Calu3 (cell line): ENCODE measurements at regions of chr17 and their contacts with region 1.

Region 1: DNA sequence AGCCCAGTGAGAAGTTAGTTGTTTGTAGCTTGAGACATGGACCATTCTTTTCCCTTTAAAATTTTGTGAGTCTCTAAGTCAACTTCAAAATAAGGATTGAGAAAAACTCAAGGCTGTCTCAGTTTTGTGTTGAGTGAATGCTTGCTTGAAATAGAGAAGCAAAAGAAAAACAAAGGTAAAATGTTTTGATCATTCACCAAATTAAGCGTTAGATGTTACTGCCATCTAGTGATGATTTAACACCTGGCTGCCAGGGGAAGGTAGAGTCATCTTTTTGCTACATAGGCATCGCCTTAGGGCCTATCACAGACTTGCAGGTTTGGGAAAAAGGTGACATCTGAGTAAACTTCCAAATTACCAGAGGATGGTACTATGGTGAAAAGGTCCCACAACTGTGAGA is 74.4 kb downstream of the PCTP start:
- DNase-seq: peak; percentile 13
- H3K4me3 Mint-ChIP-seq: no peak overlapping the region
- H3K27ac Mint-ChIP-seq: no peak overlapping the region
- H3K4me1 Mint-ChIP-seq: no peaks in the 10 kb centered on the region
- H3K27me3 Mint-ChIP-seq: peaks cover 18% of the 10 kb centered on the region
- CTCF ChIP-seq: no peak

Region 2: GRCh38 chr17:55388842-55389241 is 436.4 kb before region 1 on chr17:
- CTCF ChIA-PET with region 1: no interaction called
- intact Hi-C with region 1: no loop called
- DNase-seq: no peak
- H3K4me3 Mint-ChIP-seq: no peak overlapping the region
- H3K27ac Mint-ChIP-seq: no peak overlapping the region
- H3K4me1 Mint-ChIP-seq: peaks cover 7% of the 10 kb centered on the region
- H3K27me3 Mint-ChIP-seq: no peaks in the 10 kb centered on the region
- CTCF ChIP-seq: no peak

Region 3: GRCh38 chr17:55607731-55608341 is 217.4 kb before region 1 on chr17:
- CTCF ChIA-PET with region 1: no interaction called
- intact Hi-C with region 1: loop called (anchors 5 kb)
- DNase-seq: peak; percentile 37
- H3K4me3 Mint-ChIP-seq: no peak overlapping the region
- H3K27ac Mint-ChIP-seq: no peak overlapping the region
- H3K4me1 Mint-ChIP-seq: no peaks in the 10 kb centered on the region
- H3K27me3 Mint-ChIP-seq: no peaks in the 10 kb centered on the region
- CTCF ChIP-seq: no peak

Region 4: DNA sequence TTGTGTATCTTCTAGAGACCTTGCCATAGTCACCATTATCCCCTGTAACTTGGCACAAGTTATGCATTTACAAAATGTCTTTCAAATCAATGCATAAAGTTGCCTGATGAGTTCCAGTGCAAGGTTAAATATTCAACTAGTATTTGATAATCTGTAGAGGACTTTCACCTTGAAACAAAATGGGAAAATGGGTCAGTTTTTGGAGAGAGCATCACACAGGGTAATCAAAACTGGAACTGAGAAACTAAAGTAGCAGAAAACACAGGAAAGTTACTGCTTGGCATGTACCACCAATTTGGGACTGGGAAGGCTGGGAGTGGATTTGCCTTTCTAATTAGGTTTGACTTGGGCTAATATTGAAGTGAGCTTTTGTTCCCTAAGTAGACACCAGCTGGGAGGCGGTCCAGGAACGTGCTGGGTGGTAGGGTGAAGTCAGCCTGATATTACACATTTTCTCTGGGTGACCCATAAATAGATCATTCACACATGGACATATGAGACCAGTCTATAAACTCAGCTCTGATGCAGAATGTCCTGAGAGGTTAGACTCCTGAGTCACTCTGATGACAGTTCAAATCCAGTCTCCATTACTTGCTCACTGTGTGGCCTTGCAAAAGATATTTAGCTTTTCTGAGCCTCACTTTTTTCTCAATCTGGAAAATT is 77.9 kb after region 1 on chr17:
- CTCF ChIA-PET with region 1: no interaction called
- intact Hi-C with region 1: no loop called
- DNase-seq: no peak
- H3K4me3 Mint-ChIP-seq: no peak overlapping the region
- H3K27ac Mint-ChIP-seq: no peak overlapping the region
- H3K4me1 Mint-ChIP-seq: no peaks in the 10 kb centered on the region
- H3K27me3 Mint-ChIP-seq: peaks cover 45% of the 10 kb centered on the region
- CTCF ChIP-seq: no peak